ENCODE measurements at regions of chr22 and their contacts with region 1.

Region 1: DNA sequence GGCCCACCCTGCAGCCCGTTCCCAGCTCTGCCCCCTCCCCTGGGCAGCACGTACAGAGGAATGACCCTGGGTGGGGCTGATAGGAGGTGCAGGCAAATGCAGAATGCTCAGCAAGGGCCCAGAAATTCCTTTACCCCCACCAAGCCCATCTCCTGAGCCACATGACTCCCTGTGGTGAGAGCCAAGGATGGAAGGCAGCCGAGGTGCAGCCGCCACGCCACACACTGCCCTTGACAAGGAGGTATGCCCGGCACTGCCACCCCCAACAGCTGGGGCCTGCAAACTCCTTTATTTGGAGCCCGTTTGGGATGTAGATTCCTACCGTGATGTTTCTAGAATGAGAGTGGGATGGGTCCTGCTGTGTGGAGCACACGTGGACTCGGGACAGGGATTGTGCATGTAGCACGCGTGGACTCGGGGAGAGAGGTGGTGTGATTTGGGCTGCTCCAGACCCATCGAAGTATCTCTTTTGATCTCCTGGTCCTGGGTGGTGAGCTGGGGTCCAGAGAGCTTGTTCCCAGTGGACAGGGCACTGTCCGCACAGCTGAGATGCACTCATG is 12.9 kb downstream of the GTSE1 start:
- DNase-seq: no peak
- H3K4me3 ChIP-seq: no peak overlapping the region
- H3K27ac ChIP-seq: no peak overlapping the region
- H3K4me1 ChIP-seq: no peaks in the 10 kb centered on the region
- H3K27me3 ChIP-seq: no peaks in the 10 kb centered on the region
- CTCF ChIP-seq: no peak
- POLR2A ChIP-seq: no peak

Region 2: DNA sequence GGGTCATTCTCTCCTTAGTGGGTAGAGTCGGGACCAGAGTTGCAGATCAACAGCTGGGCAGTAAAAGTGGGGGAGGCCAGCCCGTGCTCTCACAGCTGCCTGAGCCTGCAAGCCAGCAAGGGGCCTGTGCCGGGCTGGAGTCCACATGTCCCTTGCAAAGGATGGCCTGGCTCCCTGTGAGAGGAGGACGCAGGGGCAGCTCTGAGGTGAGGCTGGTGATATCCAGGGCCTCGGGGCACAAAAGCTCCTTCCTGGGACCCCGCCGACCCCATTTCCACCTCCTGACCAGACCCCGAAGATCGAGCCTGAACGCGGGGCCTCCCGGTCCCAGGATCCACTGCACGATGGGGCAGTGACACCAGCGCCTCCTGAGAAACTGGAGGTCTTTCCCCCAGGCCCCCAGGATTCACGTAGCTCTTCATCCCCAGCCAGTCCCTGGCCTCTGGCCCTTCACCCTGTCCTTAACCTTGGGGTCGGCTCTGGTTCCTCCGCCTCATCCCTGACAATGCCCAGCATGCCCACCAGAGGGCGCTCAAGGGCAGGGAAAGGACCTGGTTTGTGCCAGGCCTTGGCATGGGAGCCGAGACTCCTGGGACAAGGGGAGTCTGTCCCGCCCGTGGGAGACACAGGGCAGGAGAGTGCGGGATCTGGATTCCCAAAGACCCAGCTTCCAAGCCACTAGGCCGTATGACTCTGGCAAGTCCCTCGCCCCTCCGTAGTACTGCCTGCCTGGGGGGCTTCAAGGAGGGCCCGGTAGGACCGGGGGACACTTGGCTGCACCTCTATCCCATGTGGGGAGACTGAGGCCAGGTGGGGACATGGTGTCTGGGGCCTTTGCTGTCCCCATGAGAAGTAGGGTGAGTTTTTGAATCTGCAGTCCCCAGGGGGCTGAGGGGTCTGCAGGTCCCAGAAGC is 314.9 kb before region 1 on chr22:
- intact Hi-C with region 1: loop called (anchors 10 kb)
- DNase-seq: peak; percentile 82
- H3K4me3 ChIP-seq: no peak overlapping the region
- H3K27ac ChIP-seq: no peak overlapping the region
- H3K4me1 ChIP-seq: peaks cover 45% of the 10 kb centered on the region
- H3K27me3 ChIP-seq: no peaks in the 10 kb centered on the region
- CTCF ChIP-seq: peak; percentile 96 to 97 (median 96)
- POLR2A ChIP-seq: no peak

Region 3: GRCh38 chr22:46122511-46122971 is 187.1 kb before region 1 on chr22:
- intact Hi-C with region 1: loop called (anchors 5 kb)
- DNase-seq: peak; percentile 84
- H3K4me3 ChIP-seq: no peak overlapping the region
- H3K27ac ChIP-seq: no peak overlapping the region
- H3K4me1 ChIP-seq: peaks cover 42% of the 10 kb centered on the region
- H3K27me3 ChIP-seq: no peaks in the 10 kb centered on the region
- CTCF ChIP-seq: peak; percentile 94 to 95 (median 95)
- POLR2A ChIP-seq: no peak

Measured in testis (tissue), 5 donors.